ENCODE measurements at regions of chr3 and their contacts with region 1.

Region 1: GRCh38 chr3:143951351-143951971 is 20.2 kb upstream of the DIPK2A start:
- DNase-seq: peak in 32 of 42 donors; percentile 6 to 78 (median 36)

Region 2: GRCh38 chr3:143775459-143775858 is 176.0 kb before region 1 on chr3:
- intact Hi-C with region 1: loop called (anchors 10 kb)
- DNase-seq: peak in 14 of 42 donors; percentile 8 to 60 (median 34)

Region 3: DNA sequence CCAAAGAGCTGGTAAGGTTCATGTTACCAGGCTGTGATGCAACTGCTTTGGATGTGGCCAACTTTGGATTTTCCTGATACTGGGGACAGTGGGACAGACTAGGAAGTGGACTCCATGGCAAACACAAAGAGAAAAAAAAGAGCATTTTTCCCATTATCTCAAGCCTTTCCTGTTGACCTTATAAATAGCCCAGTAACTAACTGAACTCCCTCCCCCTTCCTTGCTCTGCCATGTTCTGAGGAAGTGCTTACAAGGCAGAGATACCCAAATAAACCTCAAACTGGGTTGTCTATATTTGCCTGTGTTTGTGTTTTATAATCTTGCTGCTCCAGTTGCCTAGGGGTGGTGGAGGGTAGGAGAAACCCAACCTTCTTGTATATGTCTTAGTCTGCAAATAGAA is 75.9 kb before region 1 on chr3:
- intact Hi-C with region 1: no loop called
- DNase-seq: no peak

Region 4: GRCh38 chr3:144272680-144273079 is 321.2 kb after region 1 on chr3:
- intact Hi-C with region 1: no loop called
- DNase-seq: no peak

Measured in head of caudate nucleus (tissue), 42 donors.